Activated CD4-positive, alpha-beta T cell treated with anti-CD3 and anti-CD28 coated beads for 36 hours (primary cell): ENCODE measurements at regions of chr14 and their contacts with region 1.

Region 1: DNA sequence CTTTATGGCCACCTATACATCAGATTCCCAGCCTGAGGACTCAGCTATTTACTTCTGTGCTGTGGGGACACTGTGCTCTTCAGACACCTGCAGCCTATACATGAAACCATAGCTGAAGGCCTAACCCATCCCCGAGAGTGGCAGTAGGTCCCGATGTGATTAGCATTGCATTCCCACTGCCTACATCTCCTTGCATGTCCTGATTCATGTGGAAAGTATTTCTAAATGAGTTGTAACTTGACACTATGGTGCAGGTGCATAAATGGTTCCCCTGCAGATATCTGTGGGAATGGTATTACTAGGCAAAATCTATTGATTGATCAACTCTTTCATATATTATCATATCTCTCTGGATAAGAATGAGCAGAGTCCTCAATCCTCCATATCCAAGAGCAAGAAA is 433.5 kb downstream of the DAD1 start:
- DNase-seq: no peak
- ATAC-seq: no peak
- H3K4me3 Mint-ChIP-seq: no peak overlapping the region
- H3K27ac Mint-ChIP-seq: no peak overlapping the region
- H3K4me1 Mint-ChIP-seq: peaks cover 14% of the 10 kb centered on the region
- H3K27me3 Mint-ChIP-seq: no peaks in the 10 kb centered on the region

Region 2: GRCh38 chr14:22131749-22132476 is 23.7 kb before region 1 on chr14:
- CTCF ChIA-PET with region 1: no interaction called
- POLR2A ChIA-PET with region 1: interaction called, 3 read pairs
- intact Hi-C with region 1: loop called in 1 of 2 experiments (anchors 1 kb)
- DNase-seq: peak; percentile 53
- ATAC-seq: no peak
- H3K4me3 Mint-ChIP-seq: no peak overlapping the region
- H3K27ac Mint-ChIP-seq: no peak overlapping the region
- H3K4me1 Mint-ChIP-seq: no peaks in the 10 kb centered on the region
- H3K27me3 Mint-ChIP-seq: no peaks in the 10 kb centered on the region